BJ (cell line): ENCODE measurements at regions of chr10 and their contacts with region 1.

Region 1: GRCh38 chr10:6014241-6014761 is 37.0 kb upstream of the IL15RA start:
- DNase-seq: no peak
- H3K4me3 ChIP-seq: no peak overlapping the region
- H3K27me3 ChIP-seq: no peaks in the 10 kb centered on the region; the same call in 1 of the 2 replicates
- CTCF ChIP-seq: peak; percentile 79

Region 2: GRCh38 chr10:5992398-5992797 is 21.9 kb before region 1 on chr10:
- CTCF ChIA-PET with region 1: interaction called, 14 read pairs
- POLR2A ChIA-PET with region 1: no interaction called
- DNase-seq: no peak
- H3K4me3 ChIP-seq: no peak overlapping the region
- H3K27me3 ChIP-seq: peaks cover 4% of the 10 kb centered on the region
- CTCF ChIP-seq: no peak

Region 3: GRCh38 chr10:6050801-6051445 is 36.6 kb after region 1 on chr10:
- CTCF ChIA-PET with region 1: interaction called, 14 read pairs
- POLR2A ChIA-PET with region 1: no interaction called
- DNase-seq: no peak
- H3K4me3 ChIP-seq: peak overlapping the region; percentile 35
- H3K27me3 ChIP-seq: peaks cover 8% of the 10 kb centered on the region
- CTCF ChIP-seq: peak; percentile 44

Region 4: DNA sequence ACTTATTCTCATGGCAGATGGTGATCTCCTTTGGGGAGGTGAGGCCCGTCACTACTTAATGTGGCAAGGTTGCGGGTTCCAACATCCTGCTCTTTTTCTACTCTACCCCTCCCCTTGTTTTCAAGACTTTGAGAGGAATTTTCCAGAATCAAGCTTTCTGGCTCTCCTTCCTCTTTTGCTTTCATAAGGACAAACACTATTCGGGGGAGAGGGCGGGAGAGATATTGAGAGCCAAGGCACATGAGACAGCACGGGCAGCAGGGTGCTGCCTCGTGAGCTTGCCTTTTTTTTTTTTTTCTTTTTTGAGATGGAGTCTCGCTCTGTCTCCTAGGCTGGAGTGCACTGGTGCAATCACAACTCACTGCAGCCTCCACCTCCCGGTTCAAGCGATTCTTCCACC is 181.5 kb after region 1 on chr10:
- CTCF ChIA-PET with region 1: no interaction called
- POLR2A ChIA-PET with region 1: no interaction called
- DNase-seq: no peak
- H3K4me3 ChIP-seq: no peak overlapping the region
- H3K27me3 ChIP-seq: no peaks in the 10 kb centered on the region
- CTCF ChIP-seq: no peak

Region 5: GRCh38 chr10:6221971-6222751 is 207.9 kb after region 1 on chr10:
- CTCF ChIA-PET with region 1: no interaction called
- POLR2A ChIA-PET with region 1: no interaction called
- DNase-seq: no peak
- H3K4me3 ChIP-seq: no peak overlapping the region
- H3K27me3 ChIP-seq: no peaks in the 10 kb centered on the region
- CTCF ChIP-seq: no peak